Activated CD8-positive, alpha-beta T cell treated with anti-CD3 and anti-CD28 coated beads for 36 hours (primary cell): ENCODE measurements at regions of chr1 and their contacts with region 1.

Region 1: DNA sequence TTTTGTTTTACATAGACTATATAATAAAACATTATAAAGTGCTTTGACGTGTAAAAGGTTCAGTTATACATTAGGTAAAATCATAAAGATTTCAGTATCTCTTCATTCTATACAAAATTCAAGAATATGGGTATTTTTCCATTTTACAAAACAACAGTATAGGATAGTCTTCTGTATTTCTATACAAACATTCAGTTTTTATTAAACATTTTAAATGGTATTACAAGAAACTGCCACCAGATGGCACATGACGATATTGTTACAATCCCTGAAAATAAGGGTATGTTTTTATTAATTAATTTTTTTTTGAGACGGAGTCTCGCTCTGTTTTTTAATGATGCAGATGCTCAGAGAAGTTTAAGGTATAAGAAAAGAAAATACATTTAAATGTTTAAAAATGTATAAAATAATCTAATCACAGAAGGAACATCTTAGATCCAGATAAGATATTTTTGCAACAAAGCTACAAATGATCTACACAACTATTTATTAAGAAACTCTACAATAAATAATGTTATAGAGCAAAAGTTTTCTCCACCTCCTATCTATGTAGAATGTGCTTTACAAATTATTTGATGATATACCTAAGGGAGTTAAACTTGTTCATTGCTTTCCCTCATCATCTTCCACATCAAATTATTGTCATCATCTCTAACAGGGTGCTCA is 23.5 kb upstream of the RSBN1 start:
- DNase-seq: peak; percentile 32
- ATAC-seq: peak; percentile 58
- H3K4me3 Mint-ChIP-seq: no peak overlapping the region
- H3K27ac Mint-ChIP-seq: no peak overlapping the region
- H3K4me1 Mint-ChIP-seq: peaks cover 8% of the 10 kb centered on the region
- H3K27me3 Mint-ChIP-seq: no peaks in the 10 kb centered on the region
- CTCF ChIP-seq: peak; percentile 86

Region 2: GRCh38 chr1:113871597-113872113 is 35.9 kb after region 1 on chr1 and contains the start of gene PTPN22:
- CTCF ChIA-PET with region 1: interaction called, 18 read pairs
- POLR2A ChIA-PET with region 1: no interaction called
- intact Hi-C with region 1: no loop called
- DNase-seq: peak; percentile 91
- ATAC-seq: peak; percentile 79
- H3K4me3 Mint-ChIP-seq: peak within 1 kb of the TSS; percentile 91
- H3K27ac Mint-ChIP-seq: peak within 1 kb of the TSS; percentile 98
- H3K4me1 Mint-ChIP-seq: peaks cover 61% of the 10 kb centered on the region
- H3K27me3 Mint-ChIP-seq: no peaks in the 10 kb centered on the region
- CTCF ChIP-seq: no peak
- total RNA-seq, gene PTPN22: 54.0 to 56.0 TPM

Region 3: DNA sequence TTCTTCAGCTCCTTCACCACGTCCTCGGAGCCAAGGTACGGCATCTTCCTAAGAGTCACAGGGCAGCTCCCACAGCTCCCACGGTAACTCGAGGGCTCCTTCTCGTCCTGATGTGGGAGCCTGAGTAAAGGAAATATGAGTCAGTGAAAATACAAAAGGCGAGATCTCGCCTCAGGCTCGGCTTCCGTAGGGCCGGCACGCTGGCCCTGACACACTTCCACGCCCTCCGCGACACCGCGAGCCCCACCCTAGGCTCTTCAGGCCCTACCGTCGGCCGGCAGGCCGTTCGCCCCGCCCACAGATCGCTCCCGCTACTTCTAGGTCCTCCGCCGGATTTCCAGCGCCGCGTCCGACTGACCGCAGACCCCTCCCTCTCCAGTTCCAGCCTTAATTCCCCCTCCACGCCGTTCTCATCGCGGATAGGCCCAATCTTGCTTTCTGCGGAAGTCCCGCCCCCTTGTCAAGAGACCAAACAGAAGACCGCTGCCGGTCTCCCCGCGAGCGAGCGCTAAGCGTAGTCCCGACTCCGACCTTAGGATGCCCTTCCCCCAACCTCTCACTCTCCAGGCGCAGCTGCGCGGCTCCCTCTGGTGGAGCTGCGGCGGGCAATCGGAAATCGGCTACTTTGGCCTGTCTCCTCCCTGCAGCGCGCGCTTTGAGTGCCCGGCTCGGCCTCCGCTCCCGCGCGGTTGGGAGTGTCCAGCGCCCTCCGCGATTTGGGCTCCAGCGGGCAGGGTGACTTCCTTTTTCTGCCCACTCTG is 69.1 kb after region 1 on chr1 and contains the starts of genes AP4B1 and DCLRE1B:
- CTCF ChIA-PET with region 1: interaction called, 49 read pairs
- POLR2A ChIA-PET with region 1: interaction called, 13 read pairs
- intact Hi-C with region 1: loop called (anchors 5 kb)
- DNase-seq: peak; percentile 99
- ATAC-seq: peak; percentile 93
- H3K4me3 Mint-ChIP-seq: peak within 1 kb of the TSS; percentile 88
- H3K27ac Mint-ChIP-seq: peak within 1 kb of the TSS; percentile 99
- H3K4me1 Mint-ChIP-seq: peaks cover 51% of the 10 kb centered on the region
- H3K27me3 Mint-ChIP-seq: no peaks in the 10 kb centered on the region
- CTCF ChIP-seq: no peak
- total RNA-seq, gene AP4B1: 38.2 to 38.5 TPM
- total RNA-seq, gene DCLRE1B: 19.1 to 19.3 TPM

Region 4: DNA sequence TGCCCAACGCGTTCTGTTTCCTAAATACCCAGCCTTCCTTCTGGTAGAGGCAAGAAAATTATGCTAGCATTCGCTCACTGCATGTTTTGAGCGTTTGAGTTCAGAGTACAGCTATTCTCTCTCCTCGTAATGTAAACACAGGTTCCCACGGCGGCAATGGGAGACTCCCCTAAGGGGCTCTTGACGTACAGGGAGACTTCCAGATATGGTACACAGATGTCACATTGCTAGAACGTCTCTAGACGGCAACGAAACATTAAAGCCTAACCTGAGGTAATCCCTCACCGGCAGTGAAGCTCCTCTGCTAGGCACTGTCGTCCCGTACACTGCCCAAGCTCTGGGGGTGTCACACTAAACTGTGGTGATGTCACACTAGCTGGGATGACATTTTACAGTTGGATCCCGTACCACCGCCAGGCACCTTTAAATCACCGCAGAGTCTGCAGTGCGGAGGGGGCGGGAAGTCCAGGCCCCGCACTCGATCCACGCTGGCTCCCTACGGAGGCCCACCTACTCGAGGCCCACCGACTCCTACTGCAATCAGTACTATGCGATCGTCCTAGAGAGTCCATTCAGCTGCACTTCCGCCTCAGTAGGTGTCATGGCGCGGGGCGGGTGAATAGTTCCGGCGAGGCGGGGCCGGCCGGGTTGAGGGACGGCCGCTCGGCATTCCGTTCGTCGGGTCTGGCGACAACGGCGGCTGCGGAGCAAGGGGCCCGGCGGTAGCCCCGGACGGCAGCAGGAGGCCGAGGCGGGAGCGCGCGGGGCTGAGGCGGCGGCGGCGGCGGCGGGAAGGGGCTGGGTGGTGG is 93.4 kb after region 1 on chr1 and contains the start of gene HIPK1:
- CTCF ChIA-PET with region 1: interaction called, 19 read pairs
- POLR2A ChIA-PET with region 1: interaction called, 3 read pairs
- intact Hi-C with region 1: no loop called
- DNase-seq: peak; percentile 95
- ATAC-seq: peak; percentile 68
- H3K4me3 Mint-ChIP-seq: peak within 1 kb of the TSS; percentile 90
- H3K27ac Mint-ChIP-seq: peak within 1 kb of the TSS; percentile 100
- H3K4me1 Mint-ChIP-seq: peaks cover 33% of the 10 kb centered on the region
- H3K27me3 Mint-ChIP-seq: no peaks in the 10 kb centered on the region
- CTCF ChIP-seq: no peak
- total RNA-seq, gene HIPK1: 42.8 to 45.1 TPM

Region 5: DNA sequence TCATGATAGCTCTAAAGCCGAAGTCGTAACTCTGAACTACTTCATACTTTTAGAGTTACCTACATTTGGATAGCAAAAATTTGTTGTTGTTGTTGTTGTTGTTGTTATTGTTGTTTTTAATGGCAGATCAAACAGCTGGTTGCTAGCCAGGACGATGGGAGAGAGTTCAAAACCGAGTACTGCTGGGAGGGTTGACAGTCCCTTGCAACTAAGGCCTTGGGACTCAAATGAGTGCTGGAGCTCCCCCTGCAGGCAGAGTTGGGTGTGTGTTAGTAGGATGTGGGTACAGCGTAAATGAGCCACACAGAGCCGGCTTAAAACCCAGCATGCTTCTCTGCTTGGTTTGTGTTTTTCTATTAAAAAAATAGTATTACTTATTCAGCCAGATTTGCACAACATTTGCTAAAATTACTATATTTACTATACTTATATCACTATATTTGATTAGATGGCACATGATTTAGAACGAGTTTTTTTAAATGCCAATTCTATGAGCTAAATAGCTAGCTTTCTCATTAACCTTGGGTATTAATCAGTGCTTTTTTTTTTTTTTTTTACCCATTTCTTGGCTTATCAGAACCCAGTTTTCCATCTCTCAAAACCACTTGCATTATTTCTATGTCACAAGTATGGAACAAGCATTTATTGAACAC is 447.1 kb after region 1 on chr1:
- CTCF ChIA-PET with region 1: interaction called, 12 read pairs
- POLR2A ChIA-PET with region 1: no interaction called
- intact Hi-C with region 1: no loop called
- DNase-seq: peak; percentile 92
- ATAC-seq: peak; percentile 98
- H3K4me3 Mint-ChIP-seq: no peak overlapping the region
- H3K27ac Mint-ChIP-seq: no peak overlapping the region
- H3K4me1 Mint-ChIP-seq: peaks cover 11% of the 10 kb centered on the region
- H3K27me3 Mint-ChIP-seq: no peaks in the 10 kb centered on the region
- CTCF ChIP-seq: peak; percentile 83